GM12878 (cell line): ENCODE measurements at regions of chr15 and their contacts with region 1.

Region 1: DNA sequence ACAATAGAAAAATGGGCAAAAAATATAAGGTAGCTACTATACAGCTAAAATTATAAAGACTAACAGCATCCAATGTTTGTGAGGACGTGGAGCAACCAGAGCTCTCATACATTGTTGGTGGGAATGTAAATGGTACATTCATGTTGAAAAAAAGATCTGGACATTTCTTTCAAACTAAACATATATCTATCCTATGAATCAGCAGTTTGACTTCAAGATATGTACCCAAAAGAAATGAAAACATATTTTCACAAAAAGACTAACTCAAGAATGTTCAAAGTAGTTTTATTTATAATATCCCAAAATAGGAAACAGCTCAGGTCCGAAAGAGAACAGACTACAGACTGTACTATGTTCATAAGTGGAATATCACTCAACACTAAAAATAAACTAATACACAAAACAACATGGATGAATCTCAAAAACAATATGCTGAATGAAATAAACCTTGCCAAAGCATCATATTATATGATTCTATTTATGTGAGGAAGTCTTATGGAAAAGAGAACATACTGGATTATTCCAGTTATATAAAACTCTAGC is 8.8 kb upstream of the TTBK2 start:
- DNase-seq: no peak
- ATAC-seq: no peak
- H3K4me3 ChIP-seq: no peak overlapping the region
- H3K27ac ChIP-seq: no peak overlapping the region
- H3K4me1 ChIP-seq: no peaks in the 10 kb centered on the region
- H3K27me3 ChIP-seq: no peaks in the 10 kb centered on the region
- CTCF ChIP-seq: no peak
- EP300 ChIP-seq: no peak
- POLR2A ChIP-seq: no peak
- RAD21 ChIP-seq: no peak

Region 2: GRCh38 chr15:42800731-42801474 is 128.5 kb before region 1 on chr15:
- CTCF ChIA-PET with region 1: interaction called, 23 read pairs
- POLR2A ChIA-PET with region 1: no interaction called
- RAD21 ChIA-PET with region 1: interaction called, 6 read pairs
- SMC1A ChIA-PET with region 1: interaction called, 8 read pairs
- in situ Hi-C with region 1: no loop called
- intact Hi-C with region 1: loop called (anchors 2 kb)
- DNase-seq: no peak
- ATAC-seq: no peak
- H3K4me3 ChIP-seq: no peak overlapping the region
- H3K27ac ChIP-seq: no peak overlapping the region
- H3K4me1 ChIP-seq: no peaks in the 10 kb centered on the region
- H3K27me3 ChIP-seq: no peaks in the 10 kb centered on the region
- CTCF ChIP-seq: peak in 2 of 3 experiments; percentile 11 to 28; a peak in 1 of 6 replicates
- EP300 ChIP-seq: no peak
- POLR2A ChIP-seq: no peak
- RAD21 ChIP-seq: peak; percentile 30; the same call in 1 of the 2 replicates

Region 3: DNA sequence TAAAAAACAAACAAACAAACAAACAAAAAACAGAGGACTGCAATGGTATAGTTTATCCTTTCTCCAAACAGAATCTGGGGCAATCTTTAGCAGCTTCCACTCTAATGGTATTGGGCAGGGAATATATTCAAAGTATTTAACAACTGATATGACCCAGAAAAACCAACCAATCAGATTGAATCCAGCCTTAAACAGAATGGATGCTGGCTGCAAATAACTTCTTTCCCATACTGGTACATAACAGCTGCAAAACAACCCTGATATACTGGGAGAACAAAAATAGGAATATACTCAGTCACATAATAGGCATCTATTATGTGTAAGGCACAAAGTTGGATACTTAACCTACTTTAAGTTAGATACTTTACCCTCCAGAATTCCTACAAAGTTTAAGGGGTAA is 127.3 kb after region 1 on chr15:
- CTCF ChIA-PET with region 1: no interaction called
- POLR2A ChIA-PET with region 1: no interaction called
- RAD21 ChIA-PET with region 1: no interaction called
- SMC1A ChIA-PET with region 1: no interaction called
- in situ Hi-C with region 1: no loop called
- intact Hi-C with region 1: no loop called
- DNase-seq: no peak
- ATAC-seq: no peak
- H3K4me3 ChIP-seq: no peak overlapping the region
- H3K27ac ChIP-seq: no peak overlapping the region
- H3K4me1 ChIP-seq: no peaks in the 10 kb centered on the region
- H3K27me3 ChIP-seq: no peaks in the 10 kb centered on the region
- CTCF ChIP-seq: no peak
- EP300 ChIP-seq: no peak
- POLR2A ChIP-seq: no peak
- RAD21 ChIP-seq: no peak